ENCODE measurements at regions of chr1 and their contacts with region 1.

Region 1: DNA sequence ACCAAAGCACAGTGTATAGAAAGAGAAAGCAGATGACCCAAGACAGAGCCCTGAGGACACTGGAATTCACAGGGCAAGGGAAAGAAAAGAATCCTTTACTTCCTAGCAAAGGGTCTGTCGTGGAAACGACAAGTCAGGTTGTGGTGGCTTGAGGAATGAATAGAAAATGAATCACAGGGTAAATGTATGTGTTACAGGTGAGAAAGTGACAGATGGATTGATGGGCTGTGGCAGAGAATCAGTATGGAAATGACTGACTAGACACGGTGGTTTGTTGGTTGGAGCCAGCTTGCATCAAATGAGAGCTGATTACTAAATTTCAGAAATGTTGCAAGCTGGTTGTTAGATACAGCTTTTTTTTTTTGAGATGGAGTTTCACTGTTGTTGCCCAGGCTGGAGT is 46.9 kb downstream of the PTP4A2 start:
- DNase-seq: peak; percentile 79
- ATAC-seq: peak; percentile 81
- H3K4me3 Mint-ChIP-seq: peak overlapping the region; percentile 11
- H3K27ac Mint-ChIP-seq: peak overlapping the region; percentile 94
- H3K4me1 Mint-ChIP-seq: peaks cover 39% of the 10 kb centered on the region
- H3K27me3 Mint-ChIP-seq: no peaks in the 10 kb centered on the region

Region 2: DNA sequence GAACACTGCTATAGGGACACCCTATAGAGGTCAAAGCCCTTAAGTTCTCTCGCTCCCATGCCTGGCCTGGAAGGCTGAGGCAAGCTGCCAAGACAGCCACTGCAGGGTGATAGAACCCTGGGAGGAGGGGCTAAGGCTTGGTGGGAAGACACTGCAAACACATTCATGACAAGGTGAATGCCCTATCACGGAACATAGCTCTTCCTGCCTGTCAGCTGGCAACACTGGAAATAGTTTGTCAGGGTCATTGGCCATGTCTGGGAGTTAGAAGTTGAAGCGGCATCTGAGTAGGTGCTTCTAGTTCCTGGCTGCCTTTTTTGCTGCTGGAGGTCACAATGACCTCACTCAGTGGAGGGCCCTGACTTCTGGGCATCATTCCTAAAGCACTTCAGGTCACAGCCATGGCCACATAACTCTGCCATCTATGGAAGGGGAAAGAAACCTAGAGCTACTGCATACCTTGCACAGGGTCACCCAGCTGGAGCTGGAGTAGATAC is 522.6 kb before region 1 on chr1:
- CTCF ChIA-PET with region 1: no interaction called
- POLR2A ChIA-PET with region 1: no interaction called
- intact Hi-C with region 1: no loop called
- DNase-seq: no peak
- ATAC-seq: no peak
- H3K4me3 Mint-ChIP-seq: no peak overlapping the region
- H3K27ac Mint-ChIP-seq: no peak overlapping the region
- H3K4me1 Mint-ChIP-seq: peaks cover 11% of the 10 kb centered on the region
- H3K27me3 Mint-ChIP-seq: no peaks in the 10 kb centered on the region

Region 3: DNA sequence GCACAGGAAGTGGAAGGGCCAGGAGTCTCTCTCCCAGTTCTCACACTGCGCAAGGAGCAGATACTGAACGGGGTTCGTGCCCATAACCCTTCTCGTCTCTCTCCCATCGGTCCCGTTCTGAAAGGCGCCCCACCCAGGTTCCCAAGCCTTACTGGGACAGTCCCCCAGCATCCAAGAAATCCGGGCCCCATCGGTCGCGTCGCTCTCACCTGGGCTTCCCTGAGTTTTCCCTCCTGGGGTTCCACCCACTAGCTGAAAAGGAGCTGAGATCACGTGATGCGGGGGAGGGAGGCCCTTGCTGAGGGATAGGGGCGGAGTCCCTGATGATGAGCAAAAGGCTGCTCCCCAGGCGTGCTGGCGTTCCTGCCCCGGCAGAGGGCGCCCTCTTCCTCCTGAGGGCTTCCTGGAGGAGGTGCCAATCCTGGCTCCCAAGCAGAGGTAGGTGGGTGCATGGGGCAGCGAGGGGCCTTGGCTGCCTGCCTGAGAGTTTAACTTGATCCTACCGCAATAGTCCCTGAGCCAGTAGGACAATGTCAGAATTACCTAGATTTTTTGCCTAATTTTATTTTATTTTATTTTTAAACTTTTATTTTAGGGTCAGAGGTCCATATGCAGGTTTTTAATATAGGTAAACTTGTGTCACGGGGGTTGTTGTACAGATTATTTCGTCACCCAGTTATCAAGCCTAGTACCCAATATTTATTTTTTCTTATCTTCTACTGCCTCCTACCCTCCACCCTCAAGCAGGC is 75.4 kb before region 1 on chr1 and contains the start of gene SPOCD1:
- CTCF ChIA-PET with region 1: no interaction called
- POLR2A ChIA-PET with region 1: no interaction called
- intact Hi-C with region 1: loop called in 1 of 2 experiments (anchors 1 kb)
- DNase-seq: peak; percentile 94
- ATAC-seq: peak; percentile 93
- H3K4me3 Mint-ChIP-seq: no peak within 1 kb of the TSS
- H3K27ac Mint-ChIP-seq: peak within 1 kb of the TSS; percentile 17
- H3K4me1 Mint-ChIP-seq: peaks cover 9% of the 10 kb centered on the region
- H3K27me3 Mint-ChIP-seq: no peaks in the 10 kb centered on the region
- total RNA-seq, gene SPOCD1: 0.79 to 0.91 TPM

Region 4: DNA sequence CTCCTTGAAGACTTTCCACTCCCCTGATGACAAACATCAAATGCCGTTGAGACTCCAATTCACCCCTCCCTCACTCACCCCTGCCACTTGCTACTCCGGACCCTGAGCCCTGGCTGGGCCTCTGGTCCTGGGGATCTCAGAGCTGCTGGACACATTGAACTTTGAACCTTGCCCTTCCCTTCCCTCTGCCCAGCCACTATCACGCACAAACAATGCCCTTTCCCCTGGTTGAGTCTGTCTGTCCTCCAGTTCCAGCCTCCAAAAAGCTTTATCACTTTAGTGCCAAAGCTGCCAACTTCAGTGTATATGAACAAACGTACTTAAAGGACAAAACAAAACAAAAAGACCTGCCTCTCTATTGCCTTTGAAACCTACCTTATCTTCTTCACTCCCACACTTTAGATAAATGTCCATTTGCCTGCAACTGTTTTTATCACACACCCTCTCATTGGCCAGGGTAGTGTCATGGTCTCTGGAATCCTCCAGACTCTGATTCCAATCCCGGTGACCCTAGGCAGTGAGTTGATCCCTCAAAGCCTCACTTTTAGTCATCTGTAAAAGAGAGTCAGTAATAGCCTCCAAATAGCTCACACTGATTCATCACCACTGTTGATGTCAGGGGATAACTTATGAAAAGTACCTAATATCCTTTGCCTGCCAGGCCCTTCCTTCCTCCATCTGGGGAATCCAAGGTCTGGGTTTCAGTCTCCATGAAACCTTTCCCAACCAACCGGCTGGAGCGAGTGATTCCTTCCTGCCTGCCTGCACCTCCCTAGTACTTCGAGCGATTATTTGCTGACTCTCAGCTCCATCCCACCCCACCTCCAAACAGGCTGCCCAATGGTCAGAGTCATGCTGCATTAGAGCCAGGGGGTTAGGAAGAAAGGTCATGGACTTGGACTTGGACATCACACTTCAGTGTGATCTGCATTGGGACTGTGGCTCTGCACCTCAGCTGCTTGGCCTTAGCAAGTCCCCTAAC is 59.6 kb before region 1 on chr1:
- CTCF ChIA-PET with region 1: no interaction called
- POLR2A ChIA-PET with region 1: interaction called, 4 read pairs
- intact Hi-C with region 1: loop called in 1 of 2 experiments (anchors 2 kb)
- DNase-seq: no peak
- ATAC-seq: no peak
- H3K4me3 Mint-ChIP-seq: no peak overlapping the region
- H3K27ac Mint-ChIP-seq: no peak overlapping the region
- H3K4me1 Mint-ChIP-seq: peaks cover 20% of the 10 kb centered on the region
- H3K27me3 Mint-ChIP-seq: no peaks in the 10 kb centered on the region

Region 5: DNA sequence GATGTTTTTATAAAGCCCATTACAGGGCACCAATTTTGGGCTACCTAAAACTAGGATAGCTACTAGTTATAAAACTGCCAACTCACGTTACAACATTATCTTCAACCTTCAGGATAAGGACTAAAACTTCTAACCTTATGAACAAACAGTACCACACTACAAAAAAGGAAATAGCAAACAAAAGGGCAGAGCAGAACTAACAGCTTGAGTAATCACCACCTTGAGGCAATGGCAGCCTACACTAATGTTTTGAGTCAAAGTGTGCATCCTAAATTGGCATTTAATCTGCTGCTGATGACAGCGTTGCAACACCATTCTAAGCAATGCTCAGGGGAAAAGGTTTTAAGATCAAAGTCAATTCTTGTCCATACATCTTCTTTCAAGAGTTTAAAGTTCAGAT is 19.7 kb after region 1 on chr1:
- CTCF ChIA-PET with region 1: interaction called, 15 read pairs
- POLR2A ChIA-PET with region 1: interaction called, 4 read pairs
- intact Hi-C with region 1: loop called (anchors 1 kb)
- DNase-seq: peak; percentile 55
- ATAC-seq: peak; percentile 80
- H3K4me3 Mint-ChIP-seq: no peak overlapping the region
- H3K27ac Mint-ChIP-seq: peak overlapping the region; percentile 70
- H3K4me1 Mint-ChIP-seq: peaks cover 57% of the 10 kb centered on the region
- H3K27me3 Mint-ChIP-seq: no peaks in the 10 kb centered on the region

Region 6: GRCh38 chr1:31923901-31924535 is 32.7 kb after region 1 on chr1:
- CTCF ChIA-PET with region 1: interaction called, 5 read pairs
- POLR2A ChIA-PET with region 1: no interaction called
- intact Hi-C with region 1: loop called (anchors 1 to 2 kb)
- DNase-seq: no peak
- ATAC-seq: no peak
- H3K4me3 Mint-ChIP-seq: no peak overlapping the region
- H3K27ac Mint-ChIP-seq: peak overlapping the region; percentile 73
- H3K4me1 Mint-ChIP-seq: peaks cover 86% of the 10 kb centered on the region
- H3K27me3 Mint-ChIP-seq: no peaks in the 10 kb centered on the region

Region 7: DNA sequence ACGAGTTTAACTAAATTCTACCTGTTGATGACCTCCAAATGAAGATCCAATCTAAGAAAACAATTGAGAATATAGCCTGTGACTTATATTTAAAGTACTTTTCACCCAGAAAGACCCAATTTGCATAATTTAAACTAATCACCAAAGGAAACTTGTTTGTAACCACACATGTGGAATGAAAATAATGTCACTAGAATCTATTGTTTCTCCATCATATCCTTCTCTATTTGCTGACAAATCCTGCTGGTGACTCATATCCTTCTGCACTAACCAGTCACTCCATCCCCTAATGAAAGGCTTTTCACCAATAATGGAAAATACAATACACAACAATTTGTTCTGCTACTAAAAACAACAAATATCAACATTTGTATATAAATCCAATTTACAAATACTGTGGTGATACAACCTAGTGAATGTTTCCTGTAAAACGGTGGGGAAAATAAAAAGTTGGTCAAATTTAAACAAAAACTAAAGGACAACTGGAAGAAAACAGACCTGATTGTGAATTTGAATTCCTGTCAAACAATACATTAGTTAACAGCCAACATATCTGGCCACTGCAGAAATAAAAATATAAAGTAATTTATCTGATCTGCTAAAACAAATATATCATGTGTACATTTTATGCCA is 40.4 kb after region 1 on chr1:
- CTCF ChIA-PET with region 1: interaction called, 5 read pairs
- POLR2A ChIA-PET with region 1: interaction called, 5 read pairs
- intact Hi-C with region 1: loop called (anchors 1 to 2 kb)
- DNase-seq: no peak
- ATAC-seq: peak; percentile 4
- H3K4me3 Mint-ChIP-seq: peak overlapping the region; percentile 91
- H3K27ac Mint-ChIP-seq: peak overlapping the region; percentile 91
- H3K4me1 Mint-ChIP-seq: peaks cover 90% of the 10 kb centered on the region
- H3K27me3 Mint-ChIP-seq: no peaks in the 10 kb centered on the region

Region 8: DNA sequence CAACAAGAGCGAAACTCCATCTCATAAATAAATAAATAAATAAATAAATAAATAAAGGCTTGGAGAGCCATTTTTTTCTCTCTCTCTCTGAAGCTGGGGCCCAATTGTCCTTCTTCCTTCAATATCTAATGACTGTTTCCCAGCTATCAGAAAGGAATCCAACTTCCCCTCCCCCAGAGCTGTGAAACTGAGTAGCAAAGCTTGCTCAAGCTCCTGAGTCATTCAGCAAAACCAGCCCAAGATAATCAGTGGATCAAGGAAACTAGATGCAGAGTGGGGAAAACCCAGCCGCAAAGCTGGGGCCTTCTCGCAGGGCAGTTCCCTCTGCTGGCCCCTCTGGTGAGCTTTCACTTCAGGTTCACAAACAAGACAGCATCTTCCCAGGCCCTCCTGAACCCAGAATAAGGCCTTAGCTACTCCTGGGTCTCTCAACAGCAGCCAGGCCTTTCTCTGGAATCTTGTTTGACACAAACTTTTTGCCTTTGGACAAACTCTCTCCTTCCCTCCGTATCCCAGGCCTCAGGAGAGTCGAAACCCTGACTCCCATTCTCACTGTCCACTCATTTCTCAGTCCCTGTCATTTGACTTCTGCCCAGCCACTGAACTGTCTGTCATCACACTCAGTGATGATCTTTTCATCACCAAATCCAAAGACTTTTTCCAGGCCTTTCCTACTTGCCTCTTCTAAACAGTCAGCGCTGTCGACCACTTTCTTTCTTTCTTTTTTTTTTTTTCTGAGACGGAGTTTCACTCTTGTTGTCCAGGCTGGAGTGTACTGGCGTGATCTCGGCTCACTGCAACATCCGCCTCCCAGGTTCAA is 64.8 kb after region 1 on chr1:
- CTCF ChIA-PET with region 1: interaction called, 5 read pairs
- POLR2A ChIA-PET with region 1: interaction called, 4 read pairs
- intact Hi-C with region 1: loop called (anchors 1 kb)
- DNase-seq: peak; percentile 93
- ATAC-seq: peak; percentile 83
- H3K4me3 Mint-ChIP-seq: peak overlapping the region; percentile 60
- H3K27ac Mint-ChIP-seq: peak overlapping the region; percentile 95
- H3K4me1 Mint-ChIP-seq: peaks cover 81% of the 10 kb centered on the region
- H3K27me3 Mint-ChIP-seq: no peaks in the 10 kb centered on the region

Region 9: DNA sequence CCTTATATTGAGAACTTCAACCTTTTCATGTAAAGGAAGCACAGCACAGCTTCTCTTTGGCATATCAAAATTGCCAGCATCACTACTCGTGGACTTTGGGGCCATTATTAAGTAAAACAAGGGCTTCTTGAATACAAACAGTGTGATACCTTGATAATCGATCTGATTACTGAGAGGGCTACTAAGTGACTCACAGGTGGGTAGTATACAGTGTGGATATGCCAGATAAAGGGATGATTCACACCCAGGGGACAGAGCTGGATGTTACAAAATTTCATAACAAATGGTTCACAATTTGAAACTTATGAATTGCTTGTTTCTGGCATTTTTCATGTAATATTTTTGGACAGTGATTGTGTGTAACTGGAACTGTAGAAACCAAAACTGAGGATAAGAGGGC is 416.0 kb after region 1 on chr1:
- CTCF ChIA-PET with region 1: no interaction called
- POLR2A ChIA-PET with region 1: no interaction called
- intact Hi-C with region 1: no loop called
- DNase-seq: no peak
- ATAC-seq: peak; percentile 83
- H3K4me3 Mint-ChIP-seq: no peak overlapping the region
- H3K27ac Mint-ChIP-seq: peak overlapping the region; percentile 17
- H3K4me1 Mint-ChIP-seq: peaks cover 57% of the 10 kb centered on the region
- H3K27me3 Mint-ChIP-seq: no peaks in the 10 kb centered on the region